Endothelial cell of umbilical vein (primary cell): ENCODE measurements at regions of chr15 and their contacts with region 1.

Region 1: GRCh38 chr15:36579792-36580431 is 486 bp downstream of the CDIN1 start:
- DNase-seq: no peak
- H3K4me3 ChIP-seq: peak overlapping the region; percentile 24 to 87 (median 72)
- H3K27ac ChIP-seq: peak overlapping the region; percentile 92
- H3K4me1 ChIP-seq: peaks cover 10% of the 10 kb centered on the region
- H3K27me3 ChIP-seq: no peaks in the 10 kb centered on the region
- CTCF ChIP-seq: no peak
- POLR2A ChIP-seq: no peak

Region 2: GRCh38 chr15:36004891-36005490 is 574.9 kb before region 1 on chr15:
- CTCF ChIA-PET with region 1: no interaction called
- POLR2A ChIA-PET with region 1: no interaction called
- dilution Hi-C with region 1: no loop called
- intact Hi-C with region 1: loop called (anchors 5 kb)
- DNase-seq: peak; percentile 87
- H3K4me3 ChIP-seq: peak overlapping the region in 1 of 3 experiments; percentile 33
- H3K27ac ChIP-seq: peak overlapping the region; percentile 91
- H3K4me1 ChIP-seq: peaks cover 29% of the 10 kb centered on the region
- H3K27me3 ChIP-seq: no peaks in the 10 kb centered on the region
- CTCF ChIP-seq: no peak
- POLR2A ChIP-seq: no peak

Region 3: DNA sequence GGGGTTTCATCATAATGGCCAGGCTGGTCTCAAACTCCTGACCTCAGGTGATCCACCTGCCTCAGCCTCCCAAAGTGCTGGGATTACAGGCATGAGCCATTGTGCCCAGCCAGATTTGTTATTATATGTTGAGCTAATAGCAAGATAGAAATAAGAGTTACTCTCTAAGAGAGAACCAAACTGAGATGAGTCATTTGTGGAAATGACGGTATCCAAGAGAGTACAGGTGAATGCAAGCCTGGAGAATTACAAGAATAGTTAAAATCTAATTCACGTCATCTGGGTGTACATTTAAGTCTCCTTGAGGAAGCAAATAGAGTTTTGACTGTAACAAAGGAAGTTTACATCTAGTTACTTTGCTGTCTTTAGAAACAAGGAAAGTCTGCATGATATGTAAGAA is 12.5 kb before region 1 on chr15:
- CTCF ChIA-PET with region 1: no interaction called
- POLR2A ChIA-PET with region 1: no interaction called
- dilution Hi-C with region 1: no loop called
- intact Hi-C with region 1: loop called (anchors 1 kb)
- DNase-seq: no peak
- H3K4me3 ChIP-seq: no peak overlapping the region
- H3K27ac ChIP-seq: no peak overlapping the region
- H3K4me1 ChIP-seq: no peaks in the 10 kb centered on the region
- H3K27me3 ChIP-seq: peaks cover 2 to 12% of the 10 kb centered on the region in 2 experiments
- CTCF ChIP-seq: no peak
- POLR2A ChIP-seq: no peak

Region 4: DNA sequence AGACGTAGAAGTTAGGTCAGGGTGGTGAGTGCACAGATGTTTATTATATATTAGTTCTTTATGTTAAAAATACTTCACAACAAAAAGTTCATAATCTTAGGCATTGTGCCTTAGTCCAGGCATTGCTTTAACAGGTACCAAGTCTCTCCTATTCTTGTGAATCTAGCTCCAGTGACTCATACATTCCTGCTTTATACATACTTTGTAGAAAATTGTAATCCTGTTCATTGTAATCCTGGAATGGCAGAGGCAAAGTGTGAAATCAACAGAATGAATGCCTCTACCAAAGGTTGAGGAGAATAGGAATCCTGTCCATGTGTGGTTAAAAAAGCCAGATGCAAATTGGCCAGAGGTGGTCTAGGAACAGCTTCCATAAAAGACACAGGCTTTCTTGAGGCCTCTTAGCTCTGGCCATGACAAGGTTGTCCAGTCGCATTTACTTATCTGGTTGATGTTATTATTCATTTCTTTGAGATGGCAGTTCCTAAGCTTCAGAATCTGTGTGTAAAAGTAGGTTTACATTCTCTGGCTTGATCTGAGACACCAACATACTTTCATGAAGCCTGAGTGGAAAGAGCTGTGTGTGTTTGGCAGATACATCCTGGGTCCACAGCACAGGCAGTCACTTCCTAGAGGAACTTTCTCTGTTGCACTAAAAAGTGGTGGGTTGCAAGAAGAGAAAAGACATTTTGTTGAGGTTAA is 108.5 kb after region 1 on chr15:
- CTCF ChIA-PET with region 1: no interaction called
- POLR2A ChIA-PET with region 1: no interaction called
- dilution Hi-C with region 1: no loop called
- intact Hi-C with region 1: loop called (anchors 2 kb)
- DNase-seq: peak; percentile 71
- H3K4me3 ChIP-seq: no peak overlapping the region
- H3K27ac ChIP-seq: peak overlapping the region; percentile 53
- H3K4me1 ChIP-seq: peaks cover 17% of the 10 kb centered on the region
- H3K27me3 ChIP-seq: no peaks in the 10 kb centered on the region
- CTCF ChIP-seq: no peak
- POLR2A ChIP-seq: no peak

Region 5: DNA sequence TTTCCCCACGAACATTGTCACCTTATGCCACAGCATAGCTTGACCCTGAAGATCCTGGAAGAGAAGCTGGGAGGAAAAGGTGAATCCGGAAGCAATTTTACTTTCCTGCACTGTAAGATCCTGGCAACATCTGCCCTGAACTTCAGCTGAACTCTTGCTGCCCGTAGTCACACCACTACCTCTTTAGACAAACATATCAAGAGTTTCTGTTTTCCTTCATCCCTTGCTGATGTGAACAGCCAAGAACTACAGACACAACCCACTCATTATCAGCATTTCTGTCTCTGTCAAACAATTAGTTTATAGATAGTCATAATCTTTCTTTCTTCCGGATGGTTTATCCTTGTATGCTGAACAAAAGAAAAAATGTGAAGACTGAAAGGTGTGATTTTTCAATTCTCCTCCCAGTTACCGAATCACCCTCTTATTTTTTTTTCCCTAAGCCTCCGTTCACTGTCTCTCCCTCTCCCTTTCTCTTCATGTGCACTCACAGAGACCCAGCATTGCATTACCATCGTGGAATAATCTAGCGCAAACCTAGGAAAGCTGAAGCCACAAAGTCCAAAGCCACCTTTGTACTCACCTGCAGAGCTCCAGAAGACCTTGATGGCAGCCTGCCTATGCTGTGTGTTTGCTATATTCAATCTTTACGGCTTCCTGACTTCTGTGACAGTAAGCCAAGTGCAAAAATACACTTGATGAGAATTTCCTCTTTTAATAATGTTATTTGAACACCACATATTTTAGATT is 228.7 kb after region 1 on chr15:
- CTCF ChIA-PET with region 1: no interaction called
- POLR2A ChIA-PET with region 1: no interaction called
- dilution Hi-C with region 1: no loop called
- intact Hi-C with region 1: loop called (anchors 5 kb)
- DNase-seq: peak; percentile 75
- H3K4me3 ChIP-seq: no peak overlapping the region
- H3K27ac ChIP-seq: no peak overlapping the region
- H3K4me1 ChIP-seq: peaks cover 24% of the 10 kb centered on the region
- H3K27me3 ChIP-seq: no peaks in the 10 kb centered on the region
- CTCF ChIP-seq: no peak
- POLR2A ChIP-seq: no peak

Region 6: DNA sequence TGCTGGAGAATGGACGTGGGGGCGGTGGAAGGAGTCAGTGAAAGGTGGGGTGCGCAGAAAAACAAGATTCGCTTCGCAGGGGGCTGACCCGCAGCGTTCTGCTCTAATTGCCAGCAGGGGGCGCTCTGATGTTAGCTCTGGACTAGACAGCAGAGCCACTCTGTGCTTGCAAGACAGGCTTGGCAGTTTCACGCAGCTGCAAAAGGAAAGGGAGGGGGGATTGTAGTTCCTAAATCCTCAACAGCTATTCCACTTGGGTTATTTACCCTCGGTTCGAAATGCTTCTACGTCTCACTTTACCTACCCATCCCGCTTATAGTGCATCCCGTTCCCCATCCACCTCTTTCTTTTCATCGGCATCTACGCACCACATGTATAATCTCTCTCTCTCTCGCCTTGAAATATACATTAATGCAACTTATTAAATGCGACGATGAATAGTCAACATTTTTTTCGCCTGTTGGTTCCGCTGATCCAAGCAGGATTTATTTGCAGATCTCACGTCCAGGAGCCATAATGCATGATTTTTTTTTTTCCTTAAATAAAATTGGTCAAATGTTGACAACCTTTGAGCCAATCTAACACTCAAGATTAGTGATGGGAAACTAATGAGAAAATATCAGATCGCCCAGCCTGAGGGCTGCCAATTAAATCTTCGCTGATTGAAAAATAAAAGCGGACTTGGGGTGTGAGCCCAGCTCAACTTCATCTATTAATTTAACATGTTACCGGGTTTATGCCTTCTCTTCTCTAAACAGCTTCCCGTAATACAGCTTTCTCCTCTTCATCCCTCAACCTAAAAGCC is 304.0 kb after region 1 on chr15:
- CTCF ChIA-PET with region 1: no interaction called
- POLR2A ChIA-PET with region 1: no interaction called
- dilution Hi-C with region 1: no loop called
- intact Hi-C with region 1: loop called (anchors 5 kb)
- DNase-seq: peak; percentile 79
- H3K4me3 ChIP-seq: no peak overlapping the region
- H3K27ac ChIP-seq: no peak overlapping the region
- H3K4me1 ChIP-seq: peaks cover 11% of the 10 kb centered on the region
- H3K27me3 ChIP-seq: peaks cover 90 to 99% of the 10 kb centered on the region in 2 experiments
- CTCF ChIP-seq: peak; percentile 72 to 91
- POLR2A ChIP-seq: no peak